ENCODE measurements at regions of chr11 and their contacts with region 1.

Region 1: DNA sequence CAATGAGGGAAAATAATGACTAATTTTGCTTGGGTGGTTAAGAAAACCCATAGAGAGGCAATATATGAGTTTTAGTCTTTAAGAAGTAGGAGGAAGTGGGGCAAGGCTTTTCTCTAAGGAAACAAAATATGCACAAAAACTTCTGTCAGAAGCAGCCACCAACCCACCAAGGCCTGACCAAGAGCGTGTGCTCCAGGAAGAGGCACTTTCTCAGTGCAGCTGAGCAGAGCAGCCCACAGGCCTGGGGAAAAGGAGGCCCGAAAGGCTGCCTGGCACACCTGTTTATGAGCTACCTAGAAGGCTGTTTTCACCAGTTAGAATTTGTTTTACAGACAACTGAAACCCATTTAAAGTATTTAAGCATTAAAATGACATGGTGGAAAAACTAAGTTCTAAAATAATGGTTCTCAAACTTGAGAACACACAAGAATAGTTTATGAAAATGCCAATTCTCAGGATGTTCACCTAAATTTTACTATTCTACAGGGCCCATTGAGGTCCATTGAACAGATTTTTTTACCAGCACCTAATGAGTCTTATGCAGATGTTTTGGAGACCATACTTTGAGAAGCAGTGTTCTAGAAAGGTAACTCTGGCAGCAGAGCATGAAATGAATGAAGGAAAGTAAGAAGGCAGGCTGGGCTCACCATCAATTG is 160.5 kb upstream of the DDI1 start:
- DNase-seq: no peak
- H3K4me3 ChIP-seq: no peak overlapping the region
- H3K4me3 Mint-ChIP-seq: no peak overlapping the region
- H3K27ac Mint-ChIP-seq: no peak overlapping the region
- H3K4me1 ChIP-seq: no peaks in the 10 kb centered on the region
- H3K4me1 Mint-ChIP-seq: no peaks in the 10 kb centered on the region
- H3K27me3 ChIP-seq: no peaks in the 10 kb centered on the region
- H3K27me3 Mint-ChIP-seq: no peaks in the 10 kb centered on the region
- CTCF ChIP-seq: no peak

Region 2: GRCh38 chr11:103842795-103843194 is 33.2 kb before region 1 on chr11:
- CTCF ChIA-PET with region 1: no interaction called
- POLR2A ChIA-PET with region 1: no interaction called
- intact Hi-C with region 1: no loop called
- DNase-seq: no peak
- H3K4me3 ChIP-seq: no peak overlapping the region
- H3K4me3 Mint-ChIP-seq: no peak overlapping the region
- H3K27ac Mint-ChIP-seq: no peak overlapping the region
- H3K4me1 ChIP-seq: peaks cover 20% of the 10 kb centered on the region; the same call in 1 of the 2 replicates
- H3K4me1 Mint-ChIP-seq: peaks cover 12% of the 10 kb centered on the region
- H3K27me3 ChIP-seq: no peaks in the 10 kb centered on the region
- H3K27me3 Mint-ChIP-seq: no peaks in the 10 kb centered on the region
- CTCF ChIP-seq: no peak

Region 3: GRCh38 chr11:103959279-103959942 is 83.4 kb after region 1 on chr11:
- CTCF ChIA-PET with region 1: no interaction called
- POLR2A ChIA-PET with region 1: no interaction called
- intact Hi-C with region 1: no loop called
- DNase-seq: no peak
- H3K4me3 ChIP-seq: no peak overlapping the region
- H3K4me3 Mint-ChIP-seq: no peak overlapping the region
- H3K27ac Mint-ChIP-seq: no peak overlapping the region
- H3K4me1 ChIP-seq: no peaks in the 10 kb centered on the region
- H3K4me1 Mint-ChIP-seq: no peaks in the 10 kb centered on the region
- H3K27me3 ChIP-seq: no peaks in the 10 kb centered on the region
- H3K27me3 Mint-ChIP-seq: no peaks in the 10 kb centered on the region
- CTCF ChIP-seq: no peak

Region 4: DNA sequence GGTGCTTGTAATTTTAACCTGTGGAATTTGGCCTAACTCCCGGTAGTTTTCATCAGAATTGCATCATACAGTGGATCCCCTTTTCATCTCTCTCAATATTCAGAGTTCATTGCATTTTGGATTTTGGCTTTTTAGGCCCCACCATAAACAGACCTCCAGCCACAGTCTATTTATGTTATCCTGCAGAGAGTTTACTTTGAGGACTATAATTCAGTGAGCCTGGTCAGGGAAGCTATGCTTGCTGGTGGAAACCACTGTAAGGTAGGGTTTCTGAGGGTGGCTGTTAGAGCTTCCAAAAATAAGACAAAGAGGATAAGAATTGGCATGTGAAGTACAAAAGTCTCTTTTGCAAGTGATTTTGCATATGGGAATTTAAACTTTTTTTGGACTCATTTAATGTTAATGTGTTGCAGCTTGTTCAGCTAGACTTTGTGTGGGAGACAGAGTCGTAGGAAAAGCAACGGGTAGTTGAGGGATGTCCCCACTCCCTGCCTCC is 125.6 kb after region 1 on chr11:
- CTCF ChIA-PET with region 1: no interaction called
- POLR2A ChIA-PET with region 1: no interaction called
- intact Hi-C with region 1: no loop called
- DNase-seq: no peak
- H3K4me3 ChIP-seq: no peak overlapping the region
- H3K4me3 Mint-ChIP-seq: no peak overlapping the region
- H3K27ac Mint-ChIP-seq: no peak overlapping the region
- H3K4me1 ChIP-seq: peaks cover 8% of the 10 kb centered on the region
- H3K4me1 Mint-ChIP-seq: no peaks in the 10 kb centered on the region
- H3K27me3 ChIP-seq: no peaks in the 10 kb centered on the region
- H3K27me3 Mint-ChIP-seq: peaks cover 5% of the 10 kb centered on the region
- CTCF ChIP-seq: no peak

Region 5: GRCh38 chr11:104151404-104152204 is 275.6 kb after region 1 on chr11:
- CTCF ChIA-PET with region 1: no interaction called
- POLR2A ChIA-PET with region 1: no interaction called
- intact Hi-C with region 1: loop called (anchors 2 kb)
- DNase-seq: no peak
- H3K4me3 ChIP-seq: no peak overlapping the region
- H3K4me3 Mint-ChIP-seq: no peak overlapping the region
- H3K27ac Mint-ChIP-seq: no peak overlapping the region
- H3K4me1 ChIP-seq: 0 out of 2 replicates have a peak, but pooled peaks cover 3% of the 10 kb centered on the region
- H3K4me1 Mint-ChIP-seq: no peaks in the 10 kb centered on the region
- H3K27me3 ChIP-seq: no peaks in the 10 kb centered on the region
- H3K27me3 Mint-ChIP-seq: no peaks in the 10 kb centered on the region
- CTCF ChIP-seq: peak; percentile 25 to 33